ENCODE measurements at regions of chr1 and their contacts with region 1.

Region 1: DNA sequence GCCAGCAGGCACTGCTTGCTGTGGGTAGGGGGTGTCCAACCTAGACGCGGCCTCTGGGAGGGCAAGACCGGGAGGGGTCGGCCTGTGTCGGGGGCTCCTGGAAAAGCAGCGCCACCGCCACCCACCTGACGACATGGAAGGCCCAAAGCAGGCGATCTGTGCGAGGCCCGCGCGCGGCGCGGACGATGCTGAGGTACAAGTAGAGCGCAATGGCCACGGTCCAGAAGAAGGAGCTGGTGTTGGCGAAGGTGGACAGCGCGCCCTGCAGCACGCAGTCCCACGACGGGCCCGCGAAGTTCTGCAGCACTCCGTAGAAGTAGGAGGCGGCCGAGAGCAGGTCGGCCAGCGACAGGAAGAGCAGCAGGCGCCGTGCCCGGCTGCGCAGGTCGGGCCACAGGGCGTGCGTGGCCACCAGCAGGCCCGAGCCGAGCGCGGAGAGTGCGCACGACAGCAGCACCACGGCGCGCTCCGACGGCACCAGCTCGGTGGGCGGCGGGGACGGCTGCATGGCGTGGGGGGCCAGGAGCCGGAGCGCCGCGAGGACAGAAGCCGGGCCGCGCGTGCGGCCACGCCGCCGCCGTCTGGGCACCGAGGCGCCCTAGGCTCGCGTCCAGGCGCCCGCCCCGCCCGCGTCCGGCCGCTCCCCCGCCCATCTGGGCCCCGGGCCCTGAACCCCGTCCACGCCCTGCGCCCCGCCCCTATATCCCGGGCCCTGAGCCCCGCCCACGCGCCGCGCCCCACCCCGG is at the start of gene GPR157:
- DNase-seq: peak; percentile 61
- ATAC-seq: peak; percentile 98
- H3K4me3 ChIP-seq: peak within 1 kb of the TSS; percentile 85
- H3K27ac ChIP-seq: peak within 1 kb of the TSS; percentile 45; the same call in 1 of the 2 replicates
- H3K4me1 ChIP-seq: peaks cover 12% of the 10 kb centered on the region
- H3K27me3 ChIP-seq: no peaks in the 10 kb centered on the region
- CTCF ChIP-seq: peak; percentile 12; the same call in 1 of the 2 replicates
- POLR2A ChIP-seq: no peak
- RAD21 ChIP-seq: no peak
- total RNA-seq, gene GPR157: 2.2 and 2.7 TPM in 2 replicates

Region 2: DNA sequence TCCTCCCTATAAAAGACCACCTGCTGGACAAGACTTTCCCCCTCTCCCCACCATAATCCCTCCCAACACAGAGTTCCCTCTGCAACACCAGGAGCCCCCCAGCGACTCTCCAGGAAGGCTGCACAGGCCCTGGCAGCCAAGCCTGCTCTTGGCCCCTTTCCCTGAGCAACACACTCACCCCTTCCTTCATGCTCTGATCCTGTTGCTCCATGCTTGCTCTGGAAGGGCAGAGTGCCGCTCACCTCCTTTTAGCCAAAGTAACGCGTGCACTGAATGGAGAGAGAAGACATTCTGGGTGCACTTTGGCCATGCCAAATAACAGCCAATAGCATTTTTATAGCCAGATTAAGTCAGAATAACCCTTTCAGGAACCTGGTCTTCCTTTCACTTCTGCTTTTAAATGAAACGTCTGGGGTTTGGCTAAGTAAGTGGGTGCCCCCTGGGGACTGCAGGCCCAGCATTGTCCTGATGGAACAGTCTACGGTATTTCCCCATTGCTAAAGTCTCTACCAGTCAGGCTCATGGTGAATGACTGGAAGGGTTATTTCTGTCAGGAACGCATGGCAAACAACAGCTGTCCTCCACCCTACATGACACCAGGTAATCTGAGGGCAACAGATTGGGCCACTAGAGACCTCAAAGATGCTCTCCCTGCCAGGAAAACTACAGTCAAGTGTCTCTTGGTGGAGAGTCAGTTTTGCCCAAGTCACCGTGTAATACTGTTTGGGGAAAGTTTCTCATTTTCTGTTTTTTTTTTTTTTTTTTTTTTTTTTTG is 59.2 kb before region 1 on chr1 and contains the start of gene SLC2A5:
- CTCF ChIA-PET with region 1: no interaction called
- POLR2A ChIA-PET with region 1: no interaction called
- dilution Hi-C with region 1: no loop called
- in situ Hi-C with region 1: loop called (anchors 10 kb)
- intact Hi-C with region 1: no loop called
- DNase-seq: no peak
- ATAC-seq: 0 out of 2 replicates have a peak, but pooled peaks have one; percentile 6
- H3K4me3 ChIP-seq: no peak within 1 kb of the TSS
- H3K27ac ChIP-seq: peak within 1 kb of the TSS; percentile 27; the same call in 1 of the 2 replicates
- H3K4me1 ChIP-seq: peaks cover 12% of the 10 kb centered on the region
- H3K27me3 ChIP-seq: peaks cover 6% of the 10 kb centered on the region
- CTCF ChIP-seq: no peak
- POLR2A ChIP-seq: no peak
- RAD21 ChIP-seq: no peak
- total RNA-seq, gene SLC2A5: 0.18 TPM in 1 of 2 replicates, not detected in the other